ENCODE measurements at regions of chr6 and their contacts with region 1.

Region 1: DNA sequence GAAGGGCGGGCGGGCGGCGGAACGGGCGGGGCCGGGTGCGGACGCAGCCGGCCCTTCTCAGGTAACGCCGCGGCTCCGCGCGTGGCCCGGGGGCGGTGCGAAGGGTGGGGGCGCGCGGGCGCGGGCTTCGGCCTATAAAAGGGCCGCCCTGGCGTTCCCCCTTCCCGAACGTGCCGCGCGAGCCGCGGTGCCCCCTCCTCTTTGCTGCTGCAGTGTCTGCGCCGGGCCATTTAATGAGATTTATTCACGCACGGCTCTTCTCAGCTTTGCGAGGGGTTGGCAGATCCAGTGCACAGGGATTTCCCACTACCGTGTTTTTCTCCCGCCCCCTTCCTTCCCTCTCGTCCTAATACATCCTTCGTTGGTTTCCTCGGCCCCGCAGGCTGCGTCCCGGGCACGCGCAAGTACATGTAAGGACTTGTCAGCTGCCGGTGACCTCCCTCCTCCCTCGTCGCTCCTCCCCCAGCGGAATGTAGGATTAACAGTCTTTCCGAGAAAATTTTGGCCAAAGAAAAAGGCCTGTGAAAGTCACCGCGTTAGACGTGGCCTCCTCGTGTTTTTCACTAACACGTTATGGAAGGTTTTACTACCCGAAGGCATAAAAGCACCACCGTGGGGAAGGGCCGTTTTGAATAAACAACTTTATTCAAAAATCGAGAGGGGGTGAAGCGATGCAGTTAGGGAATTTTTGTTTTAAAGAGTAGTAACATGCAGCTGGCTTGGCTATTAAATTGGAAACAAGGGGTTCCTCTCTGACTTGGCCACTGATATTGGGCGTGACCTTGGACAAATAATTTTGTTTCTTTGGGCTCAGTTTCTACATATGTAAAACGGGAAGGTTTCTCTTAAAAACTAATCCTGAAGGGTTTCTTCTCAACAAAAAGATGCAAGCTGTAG is 966 bp upstream of the REV3L start:
- DNase-seq: peak; percentile 94 to 97 (median 95)
- ATAC-seq: peak; percentile 80 to 89 (median 88)
- H3K4me3 ChIP-seq: peak overlapping the region; percentile 75 to 99 (median 92)
- H3K27ac ChIP-seq: peak overlapping the region; percentile 96 to 100 (median 99)
- H3K4me1 ChIP-seq: peaks cover 0 to 58% (median 32%) of the 10 kb centered on the region in 12 donors
- H3K27me3 ChIP-seq: no peaks in the 10 kb centered on the region
- CTCF ChIP-seq: no peak
- POLR2A ChIP-seq: peak in 1 of 2 donors; percentile 79

Region 2: DNA sequence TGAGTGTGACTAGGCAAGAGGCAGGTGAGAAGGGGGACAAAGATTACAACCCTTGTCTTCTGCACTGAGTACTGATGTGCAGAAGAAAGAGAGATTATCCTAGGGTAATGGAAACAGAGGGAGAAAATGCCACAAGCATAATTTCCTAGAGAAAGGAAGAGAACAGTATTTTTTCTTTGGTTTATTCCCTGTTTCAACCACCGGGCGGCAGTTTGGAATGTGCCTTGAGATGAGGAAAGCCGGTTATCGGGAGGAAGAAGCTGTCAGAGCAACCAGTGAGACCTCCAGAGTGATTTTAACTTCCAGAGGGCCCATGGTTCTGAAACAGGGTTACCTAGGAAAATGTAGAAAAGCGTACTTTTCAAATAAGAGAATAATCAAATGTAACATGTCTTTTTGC is 122.3 kb before region 1 on chr6:
- intact Hi-C with region 1: loop called in 2 of 10 experiments (anchors 5 to 10 kb)
- DNase-seq: peak in 1 of 5 donors; percentile 22
- ATAC-seq: peak in 1 of 4 donors; percentile 69
- H3K4me3 ChIP-seq: no peak overlapping the region
- H3K27ac ChIP-seq: no peak overlapping the region
- H3K4me1 ChIP-seq: peaks cover 0 to 8% (median 0%) of the 10 kb centered on the region in 12 donors
- H3K27me3 ChIP-seq: no peaks in the 10 kb centered on the region
- CTCF ChIP-seq: peak in 10 of 12 donors; percentile 21 to 61 (median 47)
- POLR2A ChIP-seq: no peak

Region 3: DNA sequence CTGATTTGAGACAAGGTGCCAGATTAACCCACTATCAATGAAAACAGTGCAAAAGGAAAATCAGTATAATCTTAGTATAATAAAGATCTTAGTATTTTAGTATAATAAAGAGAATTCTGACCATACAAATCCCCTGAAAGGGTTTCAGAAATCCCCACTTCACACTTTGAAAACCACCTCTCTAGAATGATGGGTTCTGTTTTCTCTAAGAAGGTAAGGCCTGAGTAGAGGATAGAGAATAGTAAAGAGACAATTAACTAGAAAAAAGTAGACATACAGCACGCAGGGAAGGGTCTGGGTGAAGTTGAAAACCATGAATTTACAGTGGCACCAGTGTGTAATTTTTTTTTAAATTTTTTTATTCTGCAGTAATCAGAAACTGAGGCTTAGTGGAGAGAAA is 74.6 kb before region 1 on chr6:
- intact Hi-C with region 1: no loop called
- DNase-seq: no peak
- ATAC-seq: no peak
- H3K4me3 ChIP-seq: no peak overlapping the region
- H3K27ac ChIP-seq: peak overlapping the region in 1 of 12 donors; percentile 81
- H3K4me1 ChIP-seq: peaks cover 0 to 46% (median 0%) of the 10 kb centered on the region in 12 donors
- H3K27me3 ChIP-seq: no peaks in the 10 kb centered on the region
- CTCF ChIP-seq: no peak
- POLR2A ChIP-seq: no peak

Region 4: GRCh38 chr6:111534231-111534751 is 50.3 kb after region 1 on chr6:
- intact Hi-C with region 1: loop called in 2 of 10 experiments (anchors 5 kb)
- DNase-seq: peak in 4 of 5 donors; percentile 73 to 87 (median 80)
- ATAC-seq: peak; percentile 90 to 96 (median 94)
- H3K4me3 ChIP-seq: no peak overlapping the region
- H3K27ac ChIP-seq: peak overlapping the region in 1 of 12 donors; percentile 53
- H3K4me1 ChIP-seq: peaks cover 0 to 36% (median 26%) of the 10 kb centered on the region in 12 donors
- H3K27me3 ChIP-seq: no peaks in the 10 kb centered on the region
- CTCF ChIP-seq: no peak
- POLR2A ChIP-seq: no peak

Region 5: DNA sequence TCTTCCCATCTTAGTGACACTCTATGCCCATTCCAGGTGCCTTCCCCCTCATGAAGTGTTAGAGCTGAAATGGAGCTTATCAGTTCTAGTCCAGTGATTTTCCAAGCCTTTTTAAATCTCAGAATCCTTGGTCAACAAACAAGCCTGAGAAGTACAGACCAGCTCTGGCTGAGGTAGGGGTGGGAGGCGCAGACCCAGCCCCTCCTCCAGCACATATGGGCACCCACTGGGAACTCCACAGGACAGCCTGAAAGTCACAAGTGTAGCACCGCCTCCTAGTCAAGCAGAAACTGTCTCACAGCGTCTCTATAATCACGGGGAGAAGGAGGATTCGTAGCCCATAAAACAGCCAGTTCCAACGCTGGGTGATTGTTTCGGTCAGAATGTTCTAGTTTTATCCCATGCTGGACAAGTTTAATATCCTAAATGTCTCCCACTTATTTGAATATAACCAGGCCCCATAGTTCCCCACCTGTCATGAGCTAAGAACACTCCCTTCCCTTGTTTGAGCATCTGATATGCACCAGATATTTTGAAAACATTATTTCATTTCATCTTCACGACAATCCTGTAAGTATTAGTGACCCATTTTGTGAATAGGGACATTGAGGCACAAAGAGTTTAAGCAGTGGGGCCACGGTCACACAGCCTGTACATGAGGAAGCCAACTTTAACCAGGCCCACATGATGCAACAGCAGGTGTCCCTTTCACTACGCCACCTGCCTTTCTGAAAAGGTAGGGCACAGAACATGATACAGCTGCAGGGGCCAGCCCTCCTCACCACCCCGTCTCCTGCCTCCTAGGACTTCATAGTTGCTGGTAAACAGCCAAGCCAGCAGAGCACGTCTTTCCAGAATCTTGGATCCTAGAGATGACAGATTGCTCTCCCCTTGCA is 81.6 kb after region 1 on chr6:
- intact Hi-C with region 1: loop called in 1 of 10 experiments (anchors 5 kb)
- DNase-seq: no peak
- ATAC-seq: no peak
- H3K4me3 ChIP-seq: no peak overlapping the region
- H3K27ac ChIP-seq: peak overlapping the region in 8 of 12 donors; percentile 23 to 82 (median 50)
- H3K4me1 ChIP-seq: peaks cover 11 to 62% (median 46%) of the 10 kb centered on the region in 12 donors
- H3K27me3 ChIP-seq: no peaks in the 10 kb centered on the region
- CTCF ChIP-seq: no peak
- POLR2A ChIP-seq: no peak

Region 6: GRCh38 chr6:111642463-111643158 is 158.6 kb after region 1 on chr6:
- intact Hi-C with region 1: loop called in 5 of 10 experiments (anchors 1 to 10 kb)
- DNase-seq: peak in 4 of 5 donors; percentile 61 to 75 (median 68)
- ATAC-seq: peak; percentile 88 to 96 (median 94)
- H3K4me3 ChIP-seq: peak overlapping the region in 1 of 12 donors; percentile 7
- H3K27ac ChIP-seq: no peak overlapping the region
- H3K4me1 ChIP-seq: peaks cover 0 to 11% (median 0%) of the 10 kb centered on the region in 12 donors
- H3K27me3 ChIP-seq: no peaks in the 10 kb centered on the region
- CTCF ChIP-seq: peak; percentile 40 to 80 (median 74)
- POLR2A ChIP-seq: no peak

Measured in heart left ventricle (tissue), 16 donors.